CD4-positive, alpha-beta memory T cell (primary cell): ENCODE measurements at regions of chr17 and their contacts with region 1.

Region 1: DNA sequence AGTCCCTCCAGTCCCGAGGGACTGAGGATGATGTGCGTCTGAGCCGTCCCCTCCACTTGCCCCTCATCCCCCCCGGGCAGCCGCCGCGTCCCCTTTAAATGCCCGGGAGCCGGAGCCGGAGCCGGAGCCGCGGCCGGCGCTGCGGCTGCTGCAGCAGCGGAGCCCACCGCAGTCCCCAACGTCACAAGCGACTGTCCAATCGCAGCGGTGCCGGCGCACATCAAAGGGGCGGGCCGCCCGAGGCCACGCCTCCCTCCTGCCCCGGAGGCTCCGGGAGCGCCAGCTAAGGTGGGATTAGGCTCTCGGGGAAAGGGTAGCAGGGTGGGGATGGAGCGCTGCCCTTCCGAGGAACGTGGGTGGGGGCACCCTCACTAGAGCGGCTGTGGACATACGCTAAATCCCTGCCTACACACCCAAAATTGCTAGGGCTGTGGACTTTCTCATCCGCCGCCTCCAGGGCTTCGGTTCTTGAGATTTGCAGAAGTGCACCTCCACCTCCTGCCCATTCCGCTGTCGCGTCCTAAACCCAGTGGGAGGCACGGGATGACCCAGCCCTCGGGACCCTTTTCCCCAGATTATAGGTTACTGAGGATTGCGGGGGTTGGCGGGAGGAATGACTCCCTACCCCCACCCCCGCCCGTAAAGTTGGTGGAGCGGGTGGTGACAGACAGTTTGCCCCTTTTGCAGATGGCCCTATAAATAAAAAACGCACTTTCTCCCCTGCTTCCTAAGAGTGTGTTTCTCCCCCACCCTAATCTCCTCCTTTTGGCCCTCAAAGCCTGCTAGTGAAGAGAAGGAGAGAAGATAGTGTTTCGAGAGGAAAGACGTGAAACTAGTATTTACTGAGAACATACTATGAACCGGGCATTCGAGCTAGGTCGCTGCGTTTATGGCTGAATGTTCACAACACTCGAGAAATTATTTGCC is at the start of gene PHOSPHO1:
- DNase-seq: peak; percentile 83 to 87 (median 84)
- H3K4me3 ChIP-seq: peak within 1 kb of the TSS; percentile 62 to 88
- H3K4me3 Mint-ChIP-seq: peak within 1 kb of the TSS; percentile 81 to 95 (median 86)
- H3K27ac ChIP-seq: no peak within 1 kb of the TSS
- H3K27ac Mint-ChIP-seq: peak within 1 kb of the TSS; percentile 35 to 96 (median 78)
- H3K4me1 ChIP-seq: peaks cover 17% of the 10 kb centered on the region
- H3K4me1 Mint-ChIP-seq: peaks cover 8 to 24% (median 13%) of the 10 kb centered on the region in 4 donors
- H3K27me3 ChIP-seq: peaks cover 16% of the 10 kb centered on the region
- H3K27me3 Mint-ChIP-seq: peaks cover 7 to 12% of the 10 kb centered on the region in 2 donors
- total RNA-seq, gene PHOSPHO1: not detected

Region 2: DNA sequence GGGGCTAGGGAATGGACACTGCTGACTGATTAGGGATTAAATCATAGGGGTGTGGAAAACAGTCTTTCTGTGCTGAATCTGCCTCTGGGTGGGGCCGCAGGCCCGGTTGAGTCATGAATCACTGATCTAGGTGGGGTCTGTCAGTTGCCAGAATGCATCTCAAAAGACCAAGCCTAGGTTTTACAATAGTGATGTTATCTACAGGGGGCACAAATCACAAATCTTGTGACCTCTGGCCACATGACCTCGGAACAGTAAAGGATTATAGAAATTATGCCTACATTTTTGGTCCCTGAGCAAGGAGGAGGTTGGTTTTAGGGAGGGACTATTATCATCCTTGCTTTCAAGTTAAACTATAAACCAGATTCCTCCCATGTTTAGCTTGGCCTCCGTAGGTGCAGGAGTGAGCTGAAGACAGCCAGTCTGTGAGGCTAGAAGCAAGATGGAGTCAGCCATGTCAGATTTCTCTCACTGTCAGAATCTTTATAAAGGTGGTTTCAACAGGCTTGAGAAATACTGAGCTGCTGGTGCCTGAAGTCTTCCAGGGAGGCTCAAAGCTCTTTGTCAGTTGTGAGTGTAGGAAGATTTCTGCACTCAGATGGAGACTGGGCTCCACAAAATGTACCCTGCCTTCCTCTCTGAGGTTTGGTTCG is 33.4 kb before region 1 on chr17:
- CTCF ChIA-PET with region 1: interaction called, 120 read pairs
- POLR2A ChIA-PET with region 1: interaction called, 82 read pairs
- intact Hi-C with region 1: loop called (anchors 1 kb)
- DNase-seq: no peak
- H3K4me3 ChIP-seq: no peak overlapping the region
- H3K4me3 Mint-ChIP-seq: no peak overlapping the region
- H3K27ac ChIP-seq: no peak overlapping the region
- H3K27ac Mint-ChIP-seq: peak overlapping the region in 1 of 7 donors; percentile 65
- H3K4me1 ChIP-seq: peaks cover 8% of the 10 kb centered on the region
- H3K4me1 Mint-ChIP-seq: peaks cover 4 to 22% (median 8%) of the 10 kb centered on the region in 4 donors
- H3K27me3 ChIP-seq: no peaks in the 10 kb centered on the region
- H3K27me3 Mint-ChIP-seq: peaks cover 0 to 4% of the 10 kb centered on the region in 2 donors

Region 3: GRCh38 chr17:49210158-49211029 is 20.5 kb before region 1 on chr17 and contains the starts of genes ABI3 and GNGT2:
- CTCF ChIA-PET with region 1: interaction called, 28 read pairs
- POLR2A ChIA-PET with region 1: interaction called, 6 read pairs
- intact Hi-C with region 1: no loop called
- DNase-seq: peak; percentile 58 to 71 (median 68)
- H3K4me3 ChIP-seq: peak within 1 kb of the TSS; percentile 77 to 89
- H3K4me3 Mint-ChIP-seq: peak within 1 kb of the TSS; percentile 92 to 98 (median 96)
- H3K27ac ChIP-seq: peak within 1 kb of the TSS; percentile 65
- H3K27ac Mint-ChIP-seq: peak within 1 kb of the TSS; percentile 56 to 95 (median 91)
- H3K4me1 ChIP-seq: peaks cover 71% of the 10 kb centered on the region
- H3K4me1 Mint-ChIP-seq: peaks cover 47 to 72% (median 62%) of the 10 kb centered on the region in 4 donors
- H3K27me3 ChIP-seq: no peaks in the 10 kb centered on the region
- H3K27me3 Mint-ChIP-seq: no peaks in the 10 kb centered on the region
- total RNA-seq, gene ABI3: 9.5 to 11.5 TPM
- total RNA-seq, gene GNGT2: 2.9 to 3.3 TPM

Region 4: DNA sequence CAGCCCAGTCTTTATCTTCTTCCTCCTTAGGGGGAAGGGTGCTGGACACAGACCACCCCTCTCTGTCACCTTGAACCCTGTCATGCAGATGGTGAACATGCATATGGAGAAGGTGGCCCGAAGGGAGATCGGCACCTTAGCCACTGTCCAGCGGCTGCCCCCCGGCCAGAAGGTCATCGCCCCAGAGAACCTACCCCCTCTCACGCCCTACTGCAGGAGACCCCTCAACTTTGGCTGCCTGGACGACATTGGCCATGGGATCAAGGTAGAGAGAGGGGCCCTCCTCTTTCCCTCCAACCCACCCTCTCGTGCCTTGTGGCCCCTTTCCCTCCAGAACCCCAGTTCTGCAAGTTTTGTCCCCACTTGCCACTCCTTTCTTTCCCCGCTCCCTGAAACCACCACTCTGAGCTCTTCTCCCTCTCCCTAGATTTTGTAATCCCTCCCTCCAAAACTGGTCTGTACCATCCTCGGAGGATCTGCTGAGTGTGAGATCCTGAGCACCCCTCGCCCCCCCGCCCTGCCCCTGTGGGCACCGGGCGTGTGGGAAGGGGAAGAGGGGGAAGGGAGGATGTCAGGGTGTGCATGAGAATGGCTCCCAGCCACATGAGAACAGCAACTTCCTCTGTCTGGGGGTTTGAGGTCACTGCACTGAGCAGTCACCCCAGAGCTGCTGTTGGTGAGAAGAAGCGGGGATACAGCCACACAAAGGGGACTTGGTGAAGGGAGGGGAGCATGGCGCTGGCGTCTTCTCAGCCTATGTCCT is 13.1 kb before region 1 on chr17:
- CTCF ChIA-PET with region 1: interaction called, 28 read pairs
- POLR2A ChIA-PET with region 1: interaction called, 6 read pairs
- intact Hi-C with region 1: no loop called
- DNase-seq: peak; percentile 74 to 84 (median 83)
- H3K4me3 ChIP-seq: peak overlapping the region in 1 of 2 donors; percentile 22
- H3K4me3 Mint-ChIP-seq: peak overlapping the region; percentile 70 to 92 (median 84)
- H3K27ac ChIP-seq: peak overlapping the region; percentile 34
- H3K27ac Mint-ChIP-seq: peak overlapping the region; percentile 87 to 99 (median 96)
- H3K4me1 ChIP-seq: peaks cover 79% of the 10 kb centered on the region
- H3K4me1 Mint-ChIP-seq: peaks cover 49 to 76% (median 58%) of the 10 kb centered on the region in 4 donors
- H3K27me3 ChIP-seq: no peaks in the 10 kb centered on the region
- H3K27me3 Mint-ChIP-seq: no peaks in the 10 kb centered on the region